Motor neuron (in vitro differentiated cells): ENCODE measurements at regions of chr2 and their contacts with region 1.

Region 1: DNA sequence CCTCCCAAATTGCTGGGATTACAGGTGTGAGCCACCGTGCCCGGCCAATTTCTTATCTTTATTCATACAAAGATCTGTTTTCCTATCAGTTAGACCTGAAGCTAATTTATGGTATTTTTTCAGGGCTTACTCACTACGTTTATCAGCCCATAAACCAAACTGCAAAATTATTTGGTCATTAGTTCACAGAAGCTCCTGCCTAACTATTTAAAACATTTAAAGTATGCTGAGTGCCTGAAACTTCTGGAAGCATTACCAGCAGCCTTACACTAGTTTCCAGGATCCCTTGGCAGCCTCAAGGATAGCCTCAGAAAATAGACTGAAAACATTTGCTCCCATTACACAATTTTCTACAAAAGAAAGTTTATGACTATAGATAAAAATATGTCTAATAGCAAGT is 68.8 kb downstream of the GALNT13 start:
- ATAC-seq: no peak
- H3K4me3 ChIP-seq: no peak overlapping the region
- H3K27ac ChIP-seq: no peak overlapping the region
- H3K4me1 ChIP-seq: no peaks in the 10 kb centered on the region

Region 2: DNA sequence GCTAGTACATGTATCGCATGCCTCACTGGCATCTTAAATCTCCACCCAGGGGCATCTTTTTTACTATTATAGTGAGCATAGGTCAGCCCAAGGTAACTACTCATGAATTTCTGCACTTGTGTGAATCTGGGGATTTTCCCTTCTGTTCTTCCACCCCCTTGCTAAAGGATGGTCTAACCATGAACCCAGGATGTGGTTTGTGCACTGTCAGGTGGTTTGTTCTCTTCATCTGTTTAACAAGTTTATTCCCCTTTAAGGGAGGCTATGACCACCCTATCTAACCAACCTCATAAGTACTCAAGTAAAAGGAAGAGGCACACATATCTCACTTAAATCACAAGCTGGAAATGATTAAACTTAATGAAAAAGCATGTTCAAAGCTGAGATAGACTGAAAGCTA is 705.0 kb before region 1 on chr2:
- in situ Hi-C with region 1: loop called in 1 of 9 experiments (anchors 25 kb)
- ATAC-seq: no peak
- H3K4me3 ChIP-seq: no peak overlapping the region
- H3K27ac ChIP-seq: no peak overlapping the region
- H3K4me1 ChIP-seq: peaks cover 2 to 22% of the 10 kb centered on the region in 2 donors

Region 3: DNA sequence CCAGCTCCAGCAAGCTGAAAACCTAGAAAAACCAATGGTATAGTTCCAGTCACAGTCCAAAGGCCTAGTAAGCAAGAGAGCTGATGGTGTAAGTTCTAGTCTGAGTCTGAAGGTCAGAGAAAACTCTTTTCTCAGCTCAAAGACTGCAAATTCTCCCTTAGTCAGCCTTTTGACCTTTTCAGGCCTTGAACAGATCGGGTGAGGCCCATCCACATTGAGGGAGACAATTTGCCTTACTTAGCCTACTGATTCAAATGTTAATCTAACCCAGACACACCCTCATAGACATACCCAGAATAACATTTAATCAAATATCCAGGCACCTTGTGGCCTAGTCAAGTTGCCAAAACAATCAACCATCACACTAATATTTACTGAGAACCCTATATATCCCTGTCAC is 647.2 kb after region 1 on chr2:
- in situ Hi-C with region 1: no loop called
- ATAC-seq: peak in 2 of 8 experiments; percentile 60 to 91
- H3K4me3 ChIP-seq: no peak overlapping the region
- H3K27ac ChIP-seq: no peak overlapping the region
- H3K4me1 ChIP-seq: no peaks in the 10 kb centered on the region